ENCODE measurements at regions of chr14 and their contacts with region 1.

Region 1: GRCh38 chr14:22929104-22929847 is at the start of gene PRMT5:
- DNase-seq: peak; percentile 100
- ATAC-seq: peak; percentile 98 to 99
- H3K4me3 ChIP-seq: peak within 1 kb of the TSS; percentile 78 to 95 (median 86)
- H3K27ac ChIP-seq: peak within 1 kb of the TSS; percentile 89 to 96 (median 94)
- H3K4me1 ChIP-seq: peaks cover 9 to 11% of the 10 kb centered on the region in 2 donors
- H3K27me3 ChIP-seq: no peaks in the 10 kb centered on the region
- CTCF ChIP-seq: no peak
- POLR2A ChIP-seq: peak; percentile 84 to 92
- total RNA-seq, gene PRMT5: 67.2 to 83.2 (median 78.6) TPM

Region 2: DNA sequence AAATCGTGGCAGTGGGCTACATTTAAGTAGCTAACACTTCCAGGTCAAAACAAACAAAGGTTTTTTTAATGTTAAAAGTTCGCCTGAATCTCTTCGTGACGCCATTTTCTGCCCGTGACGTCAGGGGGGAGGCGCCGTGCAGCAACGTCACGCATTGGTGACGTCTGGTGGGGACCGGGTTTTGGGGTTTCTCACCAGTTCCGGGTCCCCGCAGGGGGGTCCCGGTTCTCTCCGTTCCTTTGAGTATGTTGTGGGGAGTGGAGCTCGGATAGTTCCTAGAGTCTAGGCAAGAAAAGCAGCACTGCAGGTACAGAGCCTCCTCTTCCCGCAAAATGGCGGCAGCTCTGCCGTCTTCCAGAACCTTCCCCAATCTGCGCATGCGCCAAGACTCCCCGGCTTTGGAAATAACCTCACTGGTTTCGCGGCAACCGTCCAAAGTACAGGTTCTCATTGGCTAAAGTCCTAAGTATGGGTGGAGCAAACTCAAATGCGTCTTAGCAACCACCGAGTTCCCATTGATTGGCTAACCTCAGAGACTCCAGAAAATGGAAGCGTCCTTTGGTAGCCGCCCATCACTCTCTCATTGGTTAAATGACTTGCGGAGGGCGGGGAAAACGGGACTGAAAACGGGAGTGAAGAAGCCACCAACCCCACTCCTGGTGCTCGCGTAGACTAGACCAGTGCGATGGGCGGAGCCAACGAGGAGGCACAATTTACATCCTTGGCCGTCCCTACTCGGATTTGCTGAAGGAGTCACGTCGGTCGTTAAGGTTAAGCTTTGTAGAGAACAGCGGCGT is 10.3 kb before region 1 on chr14 and contains the start of gene RBM23:
- in situ Hi-C with region 1: no loop called
- intact Hi-C with region 1: loop called (anchors 1 kb)
- DNase-seq: peak; percentile 99 to 100
- ATAC-seq: peak; percentile 99
- H3K4me3 ChIP-seq: peak within 1 kb of the TSS; percentile 81 to 99 (median 92)
- H3K27ac ChIP-seq: peak within 1 kb of the TSS; percentile 95 to 99 (median 98)
- H3K4me1 ChIP-seq: peaks cover 6 to 26% of the 10 kb centered on the region in 2 donors
- H3K27me3 ChIP-seq: no peaks in the 10 kb centered on the region
- CTCF ChIP-seq: no peak
- POLR2A ChIP-seq: peak; percentile 87 to 88
- total RNA-seq, gene RBM23: 37.7 to 83.3 (median 62.1) TPM

Region 3: DNA sequence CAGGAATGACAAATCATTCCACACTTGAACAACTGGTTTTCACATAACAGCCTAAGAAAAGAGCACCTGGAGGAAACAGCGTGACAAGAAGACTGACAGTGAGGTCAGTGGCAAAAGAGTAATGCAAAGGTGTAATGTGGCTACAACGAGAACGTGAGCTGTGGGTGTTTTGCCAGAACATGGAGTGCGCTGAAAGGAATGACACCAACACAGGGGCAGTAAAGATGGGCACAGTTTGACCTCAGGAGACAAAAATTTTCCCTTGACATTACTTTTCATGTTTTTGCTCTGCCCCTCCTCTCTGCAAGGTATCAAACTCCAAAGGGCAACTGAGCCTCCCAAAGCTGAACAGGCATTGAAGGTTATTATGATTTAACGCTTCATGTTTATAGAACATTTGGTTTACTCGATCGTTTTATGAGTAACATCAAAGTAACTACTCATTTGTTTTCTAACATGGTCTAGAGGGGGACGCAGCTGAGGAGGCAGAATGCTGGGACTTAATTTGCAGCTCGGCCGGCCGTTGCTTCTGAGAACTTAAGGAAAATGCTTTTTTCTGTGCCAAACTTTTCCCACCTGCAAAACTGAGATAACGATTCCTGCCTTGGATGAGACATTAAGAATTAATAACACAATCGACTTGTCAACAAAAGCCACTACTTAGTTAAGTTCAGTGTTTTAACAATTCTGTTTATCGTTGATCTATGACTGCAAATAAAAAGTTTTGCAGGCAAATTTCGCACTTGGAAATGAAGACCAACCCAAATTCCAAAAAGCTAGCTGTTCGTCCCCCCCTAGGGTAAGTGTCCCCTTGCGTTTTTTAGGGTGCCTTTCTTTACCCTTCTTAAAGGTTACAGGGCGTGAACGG is 26.7 kb after region 1 on chr14:
- in situ Hi-C with region 1: no loop called
- intact Hi-C with region 1: loop called (anchors 1 kb)
- DNase-seq: no peak
- ATAC-seq: no peak
- H3K4me3 ChIP-seq: peak overlapping the region; percentile 71 to 82 (median 82)
- H3K27ac ChIP-seq: peak overlapping the region; percentile 90 to 95 (median 94)
- H3K4me1 ChIP-seq: peaks cover 9 to 17% of the 10 kb centered on the region in 2 donors
- H3K27me3 ChIP-seq: no peaks in the 10 kb centered on the region
- CTCF ChIP-seq: no peak
- POLR2A ChIP-seq: no peak

Region 4: DNA sequence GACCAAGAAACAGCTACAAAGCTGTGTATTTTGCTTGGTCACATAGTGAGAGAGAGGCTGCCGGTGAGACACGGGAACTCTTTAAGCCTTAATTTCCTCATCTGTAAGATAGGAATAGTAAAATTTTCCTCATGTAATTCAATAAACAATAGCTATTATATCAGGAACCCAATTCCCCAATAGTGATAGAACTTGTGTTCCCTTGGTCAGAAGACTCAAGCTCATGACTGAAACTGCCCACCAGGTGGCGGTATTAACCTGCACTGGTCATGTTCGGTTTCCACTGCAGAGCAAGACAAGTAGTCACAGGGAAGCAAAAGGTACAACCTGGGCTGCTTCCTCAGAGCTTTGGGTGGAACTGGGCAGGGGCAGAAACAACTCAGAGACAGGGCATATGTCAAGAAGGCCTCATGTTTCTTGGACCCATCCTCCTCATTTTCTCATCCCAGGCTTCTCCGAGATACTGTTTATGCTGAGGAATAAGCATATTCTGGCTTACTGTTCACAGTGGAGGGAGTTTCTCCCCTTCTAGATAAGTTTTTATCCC is 57.3 kb after region 1 on chr14:
- in situ Hi-C with region 1: no loop called
- intact Hi-C with region 1: loop called (anchors 1 kb)
- DNase-seq: peak; percentile 76 to 80
- ATAC-seq: peak; percentile 83 to 84
- H3K4me3 ChIP-seq: no peak overlapping the region
- H3K27ac ChIP-seq: no peak overlapping the region
- H3K4me1 ChIP-seq: peaks cover 3 to 20% of the 10 kb centered on the region in 2 donors
- H3K27me3 ChIP-seq: peaks cover 9 to 18% (median 17%) of the 10 kb centered on the region in 3 donors
- CTCF ChIP-seq: peak; percentile 76 to 94 (median 84)
- POLR2A ChIP-seq: no peak

Region 5: GRCh38 chr14:23006544-23007419 is 77.5 kb after region 1 on chr14:
- in situ Hi-C with region 1: no loop called
- intact Hi-C with region 1: loop called (anchors 1 kb)
- DNase-seq: peak; percentile 98
- ATAC-seq: peak; percentile 98 to 99
- H3K4me3 ChIP-seq: peak overlapping the region; percentile 72 to 94 (median 78)
- H3K27ac ChIP-seq: peak overlapping the region; percentile 96 to 98 (median 96)
- H3K4me1 ChIP-seq: peaks cover 16 to 18% of the 10 kb centered on the region in 2 donors
- H3K27me3 ChIP-seq: no peaks in the 10 kb centered on the region
- CTCF ChIP-seq: peak in 1 of 5 experiments; percentile 27
- POLR2A ChIP-seq: peak; percentile 81 to 83

Region 6: GRCh38 chr14:23057757-23058653 is 128.7 kb after region 1 on chr14:
- in situ Hi-C with region 1: no loop called
- intact Hi-C with region 1: loop called (anchors 5 kb)
- DNase-seq: peak; percentile 64 to 75
- ATAC-seq: peak; percentile 86 to 89
- H3K4me3 ChIP-seq: peak overlapping the region; percentile 58 to 98 (median 71)
- H3K27ac ChIP-seq: peak overlapping the region in 3 of 4 donors; percentile 2 to 65 (median 35)
- H3K4me1 ChIP-seq: peaks cover 3 to 15% of the 10 kb centered on the region in 2 donors
- H3K27me3 ChIP-seq: no peaks in the 10 kb centered on the region
- CTCF ChIP-seq: peak; percentile 90 to 99 (median 96)
- POLR2A ChIP-seq: no peak

Region 7: GRCh38 chr14:23286020-23286905 is 357.0 kb after region 1 on chr14 and contains the start of gene HOMEZ:
- in situ Hi-C with region 1: no loop called
- intact Hi-C with region 1: loop called (anchors 10 kb)
- DNase-seq: peak; percentile 100
- ATAC-seq: peak; percentile 93 to 95
- H3K4me3 ChIP-seq: peak within 1 kb of the TSS; percentile 84 to 99 (median 94)
- H3K27ac ChIP-seq: peak within 1 kb of the TSS; percentile 98 to 100 (median 100)
- H3K4me1 ChIP-seq: peaks cover 20 to 25% of the 10 kb centered on the region in 2 donors
- H3K27me3 ChIP-seq: no peaks in the 10 kb centered on the region
- CTCF ChIP-seq: peak in 3 of 5 experiments; percentile 11 to 23 (median 21)
- POLR2A ChIP-seq: peak; percentile 88 to 91
- total RNA-seq, gene HOMEZ: 7.8 to 10.0 (median 8.4) TPM